ENCODE measurements at regions of chr19 and their contacts with region 1.

Region 1: GRCh38 chr19:9140159-9140874 is at the start of gene ZNF317:
- DNase-seq: peak; percentile 72 to 94 (median 88)
- ATAC-seq: peak; percentile 94
- H3K4me3 ChIP-seq: peak within 1 kb of the TSS; percentile 94
- H3K4me3 Mint-ChIP-seq: peak within 1 kb of the TSS; percentile 93 to 99 (median 98)
- H3K27ac ChIP-seq: peak within 1 kb of the TSS; percentile 95
- H3K27ac Mint-ChIP-seq: peak within 1 kb of the TSS; percentile 95 to 99 (median 97)
- H3K4me1 ChIP-seq: peaks cover 17 to 21% of the 10 kb centered on the region in 2 donors
- H3K4me1 Mint-ChIP-seq: peaks cover 28 to 55% (median 49%) of the 10 kb centered on the region in 7 donors
- H3K27me3 ChIP-seq: no peaks in the 10 kb centered on the region
- H3K27me3 Mint-ChIP-seq: peaks cover 0 to 7% (median 0%) of the 10 kb centered on the region in 5 donors
- total RNA-seq, gene ZNF317: 39.4 to 75.5 (median 54.5) TPM

Region 2: GRCh38 chr19:8900421-8900820 is 239.9 kb before region 1 on chr19:
- CTCF ChIA-PET with region 1: no interaction called
- POLR2A ChIA-PET with region 1: no interaction called
- intact Hi-C with region 1: no loop called
- DNase-seq: no peak
- ATAC-seq: no peak
- H3K4me3 ChIP-seq: no peak overlapping the region
- H3K4me3 Mint-ChIP-seq: no peak overlapping the region
- H3K27ac ChIP-seq: no peak overlapping the region
- H3K27ac Mint-ChIP-seq: no peak overlapping the region
- H3K4me1 ChIP-seq: no peaks in the 10 kb centered on the region
- H3K4me1 Mint-ChIP-seq: peaks cover 0 to 1% (median 0%) of the 10 kb centered on the region in 7 donors
- H3K27me3 ChIP-seq: no peaks in the 10 kb centered on the region
- H3K27me3 Mint-ChIP-seq: peaks cover 0 to 4% (median 0%) of the 10 kb centered on the region in 5 donors

Region 3: GRCh38 chr19:9004153-9004552 is 136.2 kb before region 1 on chr19:
- CTCF ChIA-PET with region 1: no interaction called
- POLR2A ChIA-PET with region 1: no interaction called
- intact Hi-C with region 1: no loop called
- DNase-seq: no peak
- ATAC-seq: no peak
- H3K4me3 ChIP-seq: no peak overlapping the region
- H3K4me3 Mint-ChIP-seq: no peak overlapping the region
- H3K27ac ChIP-seq: no peak overlapping the region
- H3K27ac Mint-ChIP-seq: no peak overlapping the region
- H3K4me1 ChIP-seq: no peaks in the 10 kb centered on the region
- H3K4me1 Mint-ChIP-seq: peaks cover 0 to 2% (median 0%) of the 10 kb centered on the region in 7 donors
- H3K27me3 ChIP-seq: no peaks in the 10 kb centered on the region
- H3K27me3 Mint-ChIP-seq: peaks cover 0 to 24% (median 10%) of the 10 kb centered on the region in 5 donors

Region 4: GRCh38 chr19:9309139-9309973 is 169.0 kb after region 1 on chr19 and contains the start of gene ZNF699:
- CTCF ChIA-PET with region 1: no interaction called
- POLR2A ChIA-PET with region 1: no interaction called
- intact Hi-C with region 1: loop called (anchors 2 to 5 kb)
- DNase-seq: peak; percentile 94 to 100 (median 97)
- ATAC-seq: peak; percentile 94
- H3K4me3 ChIP-seq: peak within 1 kb of the TSS; percentile 95
- H3K4me3 Mint-ChIP-seq: peak within 1 kb of the TSS; percentile 89 to 98 (median 96)
- H3K27ac ChIP-seq: peak within 1 kb of the TSS; percentile 98
- H3K27ac Mint-ChIP-seq: peak within 1 kb of the TSS; percentile 89 to 99 (median 97)
- H3K4me1 ChIP-seq: peaks cover 6 to 15% of the 10 kb centered on the region in 2 donors
- H3K4me1 Mint-ChIP-seq: peaks cover 4 to 37% (median 24%) of the 10 kb centered on the region in 7 donors
- H3K27me3 ChIP-seq: no peaks in the 10 kb centered on the region
- H3K27me3 Mint-ChIP-seq: peaks cover 0 to 2% (median 0%) of the 10 kb centered on the region in 5 donors
- total RNA-seq, gene ZNF699: 9.1 to 19.1 (median 15.5) TPM

Region 5: DNA sequence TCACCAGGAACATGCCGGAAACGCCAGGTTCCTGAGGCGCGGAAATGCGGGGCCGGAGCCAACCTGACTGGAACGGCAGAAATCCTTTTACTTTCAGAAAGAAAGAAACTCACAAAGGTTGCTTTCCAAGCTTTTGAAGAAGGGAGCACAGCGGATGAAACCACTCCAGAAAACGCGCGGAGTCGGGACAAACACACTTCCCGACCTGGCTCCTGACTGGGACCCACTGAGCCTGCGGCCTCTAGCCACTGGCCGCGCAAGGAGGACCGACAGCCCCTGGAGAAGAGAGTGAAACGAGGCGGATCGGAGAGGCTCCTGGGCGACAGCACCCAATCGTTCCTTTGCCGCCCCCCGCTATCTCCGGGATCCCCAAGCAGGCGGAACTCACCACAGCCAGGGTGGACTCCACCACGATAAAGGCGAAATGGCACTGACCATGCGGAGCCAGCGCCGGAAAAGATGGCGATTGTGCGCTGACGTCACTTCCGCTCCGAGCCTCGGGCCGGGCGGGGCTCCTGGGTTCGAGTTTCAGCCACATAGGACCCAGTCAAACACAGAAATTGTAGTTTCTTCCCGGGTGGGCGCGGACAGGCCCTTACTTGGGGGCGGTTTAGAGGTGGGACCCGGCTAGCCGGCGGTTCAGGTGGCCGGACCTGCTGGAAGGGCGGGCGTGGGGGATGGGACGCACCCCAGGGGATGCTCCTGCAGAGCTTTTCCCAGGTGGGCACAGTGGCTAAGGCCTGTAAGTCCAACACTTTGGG is 443.9 kb after region 1 on chr19 and contains the start of gene ZNF121:
- CTCF ChIA-PET with region 1: no interaction called
- POLR2A ChIA-PET with region 1: no interaction called
- intact Hi-C with region 1: loop called (anchors 1 kb)
- DNase-seq: peak; percentile 61 to 82 (median 74)
- ATAC-seq: peak; percentile 87
- H3K4me3 ChIP-seq: peak within 1 kb of the TSS; percentile 98
- H3K4me3 Mint-ChIP-seq: peak within 1 kb of the TSS; percentile 91 to 99 (median 96)
- H3K27ac ChIP-seq: peak within 1 kb of the TSS; percentile 97
- H3K27ac Mint-ChIP-seq: peak within 1 kb of the TSS; percentile 94 to 99 (median 95)
- H3K4me1 ChIP-seq: peaks cover 7 to 15% of the 10 kb centered on the region in 2 donors
- H3K4me1 Mint-ChIP-seq: peaks cover 21 to 54% (median 34%) of the 10 kb centered on the region in 7 donors
- H3K27me3 ChIP-seq: no peaks in the 10 kb centered on the region
- H3K27me3 Mint-ChIP-seq: peaks cover 0 to 5% (median 4%) of the 10 kb centered on the region in 5 donors
- total RNA-seq, gene ZNF121: 28.3 to 49.4 (median 47.0) TPM

Region 6: GRCh38 chr19:9796113-9796773 is 655.9 kb after region 1 on chr19:
- CTCF ChIA-PET with region 1: no interaction called
- POLR2A ChIA-PET with region 1: no interaction called
- intact Hi-C with region 1: loop called (anchors 1 to 2 kb)
- DNase-seq: peak; percentile 55 to 92 (median 87)
- ATAC-seq: peak; percentile 48
- H3K4me3 ChIP-seq: no peak overlapping the region
- H3K4me3 Mint-ChIP-seq: peak overlapping the region in 3 of 10 donors; percentile 16 to 43 (median 16)
- H3K27ac ChIP-seq: peak overlapping the region; percentile 63
- H3K27ac Mint-ChIP-seq: peak overlapping the region; percentile 66 to 97 (median 90)
- H3K4me1 ChIP-seq: peaks cover 0 to 7% of the 10 kb centered on the region in 2 donors
- H3K4me1 Mint-ChIP-seq: peaks cover 15 to 43% (median 34%) of the 10 kb centered on the region in 7 donors
- H3K27me3 ChIP-seq: no peaks in the 10 kb centered on the region
- H3K27me3 Mint-ChIP-seq: peaks cover 0 to 3% (median 0%) of the 10 kb centered on the region in 5 donors

Region 7: GRCh38 chr19:10000171-10000826 is 860.0 kb after region 1 on chr19:
- CTCF ChIA-PET with region 1: no interaction called
- POLR2A ChIA-PET with region 1: no interaction called
- intact Hi-C with region 1: loop called in 1 of 2 experiments (anchors 5 kb)
- DNase-seq: peak; percentile 34 to 74 (median 48)
- ATAC-seq: peak; percentile 54
- H3K4me3 ChIP-seq: no peak overlapping the region
- H3K4me3 Mint-ChIP-seq: no peak overlapping the region
- H3K27ac ChIP-seq: no peak overlapping the region
- H3K27ac Mint-ChIP-seq: peak overlapping the region in 2 of 9 donors; percentile 17 to 28
- H3K4me1 ChIP-seq: peaks cover 0 to 3% of the 10 kb centered on the region in 2 donors
- H3K4me1 Mint-ChIP-seq: peaks cover 0 to 8% (median 6%) of the 10 kb centered on the region in 7 donors
- H3K27me3 ChIP-seq: no peaks in the 10 kb centered on the region
- H3K27me3 Mint-ChIP-seq: peaks cover 5 to 54% (median 45%) of the 10 kb centered on the region in 5 donors